Endothelial cell of umbilical vein (primary cell): ENCODE measurements at regions of chr2 and their contacts with region 1.

Region 1: DNA sequence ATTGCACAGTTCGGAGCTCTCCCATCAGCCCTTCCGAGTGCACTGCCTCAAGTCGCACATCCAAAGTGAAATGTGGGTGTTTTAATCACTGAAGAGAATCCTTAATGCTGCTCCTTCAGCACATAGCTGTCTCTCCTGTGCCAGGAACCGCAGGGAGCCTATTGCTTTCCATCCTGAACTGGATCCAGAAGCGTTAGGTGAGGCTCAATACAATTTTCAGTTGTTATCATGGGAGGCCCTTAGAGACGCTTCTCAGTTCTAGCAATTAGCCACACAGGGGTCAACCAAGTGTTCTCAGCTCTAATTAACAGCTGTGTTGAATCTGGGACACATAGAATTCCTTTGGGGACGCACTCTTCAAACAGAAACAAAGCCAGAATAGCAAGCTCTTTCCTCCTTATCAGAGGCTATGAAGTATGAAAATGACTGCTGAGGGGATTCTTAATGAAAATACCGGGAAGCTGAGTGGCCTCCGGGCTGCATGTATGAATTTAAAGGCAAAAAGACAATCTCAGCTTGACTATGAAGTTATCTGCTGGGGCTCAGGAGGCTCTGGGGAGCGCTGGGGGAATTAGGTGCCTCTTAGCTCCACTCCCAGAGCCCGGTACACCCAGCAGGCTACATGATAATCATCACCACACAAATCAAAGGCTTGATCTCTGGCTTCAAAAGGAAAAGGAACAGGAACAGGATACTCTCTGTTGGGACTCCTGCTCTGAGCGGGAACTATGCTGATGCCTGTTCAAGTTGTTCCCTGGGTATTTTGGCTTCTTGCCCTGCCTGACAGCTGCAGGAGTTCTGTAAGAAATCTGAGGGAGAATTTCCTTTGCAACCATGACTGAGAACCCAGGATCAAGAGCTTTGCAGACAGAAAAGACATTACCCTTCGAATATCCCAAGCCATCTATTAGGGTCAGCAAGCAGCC is 55.4 kb upstream of the NCOA1 start:
- DNase-seq: peak; percentile 83
- H3K4me3 ChIP-seq: no peak overlapping the region
- H3K27ac ChIP-seq: no peak overlapping the region
- H3K4me1 ChIP-seq: peaks cover 8% of the 10 kb centered on the region
- H3K27me3 ChIP-seq: no peaks in the 10 kb centered on the region
- CTCF ChIP-seq: no peak
- POLR2A ChIP-seq: no peak

Region 2: GRCh38 chr2:24382363-24383073 is 53.1 kb before region 1 on chr2:
- CTCF ChIA-PET with region 1: no interaction called
- POLR2A ChIA-PET with region 1: no interaction called
- dilution Hi-C with region 1: no loop called
- intact Hi-C with region 1: no loop called
- DNase-seq: peak; percentile 66
- H3K4me3 ChIP-seq: no peak overlapping the region
- H3K27ac ChIP-seq: no peak overlapping the region
- H3K4me1 ChIP-seq: no peaks in the 10 kb centered on the region
- H3K27me3 ChIP-seq: no peaks in the 10 kb centered on the region
- CTCF ChIP-seq: peak; percentile 30 to 78
- POLR2A ChIP-seq: no peak

Region 3: GRCh38 chr2:24421668-24422067 is 14.0 kb before region 1 on chr2:
- CTCF ChIA-PET with region 1: interaction called, 17 read pairs
- POLR2A ChIA-PET with region 1: no interaction called
- dilution Hi-C with region 1: no loop called
- intact Hi-C with region 1: no loop called
- DNase-seq: peak; percentile 62
- H3K4me3 ChIP-seq: no peak overlapping the region
- H3K27ac ChIP-seq: no peak overlapping the region
- H3K4me1 ChIP-seq: no peaks in the 10 kb centered on the region
- H3K27me3 ChIP-seq: peaks cover 3 to 5% of the 10 kb centered on the region in 2 experiments
- CTCF ChIP-seq: peak; percentile 48 to 63
- POLR2A ChIP-seq: no peak

Region 4: GRCh38 chr2:24490674-24491625 is 55.3 kb after region 1 on chr2 and contains the start of gene NCOA1:
- CTCF ChIA-PET with region 1: no interaction called
- POLR2A ChIA-PET with region 1: no interaction called
- dilution Hi-C with region 1: no loop called
- intact Hi-C with region 1: loop called (anchors 5 kb)
- DNase-seq: peak; percentile 84
- H3K4me3 ChIP-seq: peak within 1 kb of the TSS; percentile 62 to 78 (median 76)
- H3K27ac ChIP-seq: peak within 1 kb of the TSS; percentile 26
- H3K4me1 ChIP-seq: peaks cover 29% of the 10 kb centered on the region
- H3K27me3 ChIP-seq: peaks cover 0 to 3% of the 10 kb centered on the region in 2 experiments
- CTCF ChIP-seq: peak in 1 of 2 donors; percentile 29
- POLR2A ChIP-seq: no peak
- total RNA-seq, gene NCOA1: 10.9 and 14.1 TPM in 2 replicates